ENCODE measurements at regions of chr14 and their contacts with region 1.

Region 1: DNA sequence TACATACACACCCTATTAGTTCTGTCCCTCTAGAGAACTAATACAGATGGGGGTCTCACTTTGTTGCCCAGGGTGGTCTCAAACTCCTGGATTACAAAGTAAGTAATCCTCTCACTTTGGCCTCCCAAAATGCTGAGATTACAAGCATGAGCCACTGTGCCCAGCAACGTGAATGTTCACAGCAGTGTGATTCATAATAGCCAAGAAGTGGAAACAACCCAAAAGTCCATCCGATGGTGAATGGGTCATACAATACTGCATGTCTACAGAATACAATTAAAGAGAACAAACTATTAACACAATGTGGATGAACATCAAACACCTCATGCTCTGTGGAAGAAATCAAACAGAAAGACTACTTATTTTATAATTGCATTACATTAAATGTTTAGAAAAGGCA is 57.3 kb upstream of the SYNE2 start:
- DNase-seq: no peak
- H3K4me3 ChIP-seq: no peak overlapping the region
- H3K27ac ChIP-seq: no peak overlapping the region
- H3K4me1 ChIP-seq: peaks cover 2% of the 10 kb centered on the region
- H3K27me3 ChIP-seq: peaks cover 0 to 2% of the 10 kb centered on the region in 2 experiments
- CTCF ChIP-seq: no peak
- POLR2A ChIP-seq: no peak

Region 2: GRCh38 chr14:63759456-63759855 is 36.1 kb before region 1 on chr14:
- CTCF ChIA-PET with region 1: no interaction called
- POLR2A ChIA-PET with region 1: no interaction called
- dilution Hi-C with region 1: no loop called
- intact Hi-C with region 1: no loop called
- DNase-seq: no peak
- H3K4me3 ChIP-seq: no peak overlapping the region
- H3K27ac ChIP-seq: no peak overlapping the region
- H3K4me1 ChIP-seq: no peaks in the 10 kb centered on the region
- H3K27me3 ChIP-seq: no peaks in the 10 kb centered on the region
- CTCF ChIP-seq: no peak
- POLR2A ChIP-seq: no peak

Region 3: DNA sequence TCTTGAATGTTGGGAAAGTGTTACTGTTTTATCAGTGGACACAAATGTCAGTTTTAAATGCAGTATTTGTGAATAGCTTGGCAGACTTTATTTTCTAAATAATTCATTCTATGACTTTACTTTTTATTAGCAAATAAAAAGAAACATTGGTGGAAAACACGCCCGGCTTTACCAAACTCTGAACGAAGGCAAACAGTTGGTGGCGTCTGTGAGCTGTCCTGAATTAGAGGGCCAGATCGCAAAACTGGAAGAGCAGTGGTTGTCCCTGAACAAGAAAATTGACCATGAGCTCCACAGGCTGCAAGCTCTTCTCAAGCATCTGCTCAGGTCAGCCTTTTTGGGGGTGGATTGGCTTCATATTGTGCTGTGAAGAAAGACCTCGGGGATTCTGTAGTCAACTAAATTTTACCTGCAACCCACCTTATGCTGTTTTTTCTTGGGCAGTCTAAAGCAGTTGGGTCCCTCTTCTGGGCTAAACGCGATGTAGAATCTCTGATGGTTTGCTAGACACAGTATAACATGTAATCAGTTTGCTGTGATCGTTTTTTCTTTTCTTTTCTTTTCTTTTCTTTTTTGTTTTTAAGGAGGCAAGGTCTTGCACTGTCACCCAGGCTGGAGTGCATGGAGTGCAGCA is 342.2 kb after region 1 on chr14:
- CTCF ChIA-PET with region 1: no interaction called
- POLR2A ChIA-PET with region 1: no interaction called
- dilution Hi-C with region 1: no loop called
- intact Hi-C with region 1: loop called (anchors 10 kb)
- DNase-seq: peak; percentile 20
- H3K4me3 ChIP-seq: no peak overlapping the region
- H3K27ac ChIP-seq: no peak overlapping the region
- H3K4me1 ChIP-seq: no peaks in the 10 kb centered on the region
- H3K27me3 ChIP-seq: no peaks in the 10 kb centered on the region
- CTCF ChIP-seq: peak in 1 of 2 donors; percentile 22
- POLR2A ChIP-seq: no peak

Region 4: GRCh38 chr14:64786296-64787149 is 991.0 kb after region 1 on chr14:
- CTCF ChIA-PET with region 1: no interaction called
- POLR2A ChIA-PET with region 1: no interaction called
- dilution Hi-C with region 1: no loop called
- intact Hi-C with region 1: no loop called
- DNase-seq: peak; percentile 45
- H3K4me3 ChIP-seq: no peak overlapping the region
- H3K27ac ChIP-seq: no peak overlapping the region
- H3K4me1 ChIP-seq: peaks cover 13% of the 10 kb centered on the region
- H3K27me3 ChIP-seq: no peaks in the 10 kb centered on the region
- CTCF ChIP-seq: no peak
- POLR2A ChIP-seq: no peak

Measured in endothelial cell of umbilical vein (primary cell).